ENCODE measurements at regions of chr19 and their contacts with region 1.

Region 1: DNA sequence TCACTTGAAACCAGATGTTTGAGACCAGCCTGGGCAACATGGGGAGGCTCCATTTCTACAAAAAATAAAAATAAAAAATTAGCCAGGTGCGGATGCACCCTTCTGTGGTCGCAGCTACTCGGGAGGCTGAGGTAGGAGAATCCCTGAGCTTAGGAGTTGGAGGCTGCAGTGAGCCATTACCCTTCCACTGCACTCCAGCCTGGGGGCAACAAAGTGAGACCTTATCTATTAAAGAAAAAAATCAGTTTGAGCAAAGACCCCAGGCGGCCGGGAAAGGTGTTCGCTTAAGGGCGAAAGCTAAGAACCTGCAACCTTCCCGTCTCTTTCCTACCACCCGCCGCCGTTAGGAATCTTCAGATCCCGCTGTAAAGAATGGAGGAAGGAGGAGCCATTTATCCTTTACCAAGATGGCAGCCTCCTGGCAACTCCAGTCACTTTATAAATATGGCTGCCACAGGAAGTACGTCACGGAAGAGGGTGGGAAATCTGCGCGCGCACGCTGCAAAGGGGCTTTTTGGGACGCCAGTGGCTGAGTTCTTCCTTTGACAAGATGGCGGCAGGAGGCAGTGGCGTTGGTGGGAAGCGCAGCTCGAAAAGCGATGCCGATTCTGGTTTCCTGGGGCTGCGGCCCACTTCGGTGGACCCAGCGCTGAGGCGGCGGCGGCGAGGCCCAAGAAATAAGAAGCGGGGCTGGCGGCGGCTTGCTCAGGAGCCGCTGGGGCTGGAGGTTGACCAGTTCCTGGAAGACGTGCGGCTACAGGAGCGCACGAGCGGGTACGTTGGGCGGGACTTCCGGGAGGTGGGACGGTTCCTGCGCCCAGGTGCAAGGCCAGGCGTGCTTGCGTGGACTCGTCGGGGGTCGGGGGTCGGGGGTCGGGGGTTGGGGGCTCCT is at the start of gene NOP53:
- DNase-seq: peak; percentile 94
- H3K4me3 Mint-ChIP-seq: peak within 1 kb of the TSS; percentile 99
- H3K27ac Mint-ChIP-seq: peak within 1 kb of the TSS; percentile 100
- H3K4me1 Mint-ChIP-seq: peaks cover 37% of the 10 kb centered on the region
- H3K27me3 Mint-ChIP-seq: peaks cover 2% of the 10 kb centered on the region
- total RNA-seq, gene NOP53: 206 and 211 TPM in 2 replicates

Region 2: GRCh38 chr19:47112997-47113849 is 632.0 kb before region 1 on chr19 and contains the start of gene ZC3H4:
- intact Hi-C with region 1: loop called (anchors 1 kb)
- DNase-seq: peak; percentile 100
- H3K4me3 Mint-ChIP-seq: peak within 1 kb of the TSS; percentile 92
- H3K27ac Mint-ChIP-seq: peak within 1 kb of the TSS; percentile 99
- H3K4me1 Mint-ChIP-seq: peaks cover 33% of the 10 kb centered on the region
- H3K27me3 Mint-ChIP-seq: no peaks in the 10 kb centered on the region
- total RNA-seq, gene ZC3H4: 111 and 114 TPM in 2 replicates

Region 3: DNA sequence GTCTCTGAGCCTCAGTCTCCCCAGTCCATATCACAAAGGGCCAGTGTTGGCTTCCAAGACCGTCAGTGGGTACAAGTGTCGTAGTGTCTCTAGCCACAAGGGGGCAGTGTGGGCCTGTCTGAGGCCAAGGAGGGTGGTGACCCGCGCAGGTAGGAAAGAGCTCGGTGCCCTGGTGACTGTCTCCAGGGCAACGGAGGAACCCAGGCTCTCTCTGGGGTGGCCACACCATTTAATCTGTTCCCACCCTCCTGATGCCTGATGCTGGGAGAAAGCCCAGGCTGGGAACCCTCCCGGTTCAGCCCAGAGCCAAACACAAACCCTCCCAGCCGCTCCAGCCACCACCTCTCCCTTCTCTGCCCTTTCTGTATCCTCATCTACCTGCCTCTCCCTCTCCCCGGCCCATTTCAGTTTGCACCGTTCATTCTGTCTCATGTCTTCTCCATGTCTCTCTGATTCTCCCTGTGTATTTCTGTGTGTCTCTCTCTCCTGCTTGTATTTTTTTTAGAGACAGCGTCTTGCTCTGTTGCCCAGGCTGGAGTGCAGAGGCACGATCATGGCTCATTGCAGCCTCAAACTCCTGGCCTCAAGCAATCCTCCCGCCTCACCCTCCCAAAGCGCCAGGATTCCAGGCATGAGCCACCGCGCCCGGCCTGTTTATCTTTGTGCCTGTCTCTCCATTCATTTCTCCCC is 308.4 kb before region 1 on chr19:
- intact Hi-C with region 1: loop called (anchors 1 kb)
- DNase-seq: peak; percentile 74
- H3K4me3 Mint-ChIP-seq: no peak overlapping the region
- H3K27ac Mint-ChIP-seq: no peak overlapping the region
- H3K4me1 Mint-ChIP-seq: peaks cover 32% of the 10 kb centered on the region
- H3K27me3 Mint-ChIP-seq: peaks cover 12% of the 10 kb centered on the region

Region 4: GRCh38 chr19:47600246-47601179 is 144.7 kb before region 1 on chr19:
- intact Hi-C with region 1: loop called (anchors 2 kb)
- DNase-seq: peak; percentile 98
- H3K4me3 Mint-ChIP-seq: peak overlapping the region; percentile 87
- H3K27ac Mint-ChIP-seq: peak overlapping the region; percentile 89
- H3K4me1 Mint-ChIP-seq: peaks cover 31% of the 10 kb centered on the region
- H3K27me3 Mint-ChIP-seq: peaks cover 1% of the 10 kb centered on the region

Region 5: GRCh38 chr19:47713046-47714021 is 31.9 kb before region 1 on chr19 and contains the start of gene EHD2:
- intact Hi-C with region 1: loop called (anchors 1 kb)
- DNase-seq: peak; percentile 9
- H3K4me3 Mint-ChIP-seq: no peak within 1 kb of the TSS
- H3K27ac Mint-ChIP-seq: no peak within 1 kb of the TSS
- H3K4me1 Mint-ChIP-seq: no peaks in the 10 kb centered on the region
- H3K27me3 Mint-ChIP-seq: peaks cover 21% of the 10 kb centered on the region
- total RNA-seq, gene EHD2: 0.29 and 0.54 TPM in 2 replicates

Region 6: DNA sequence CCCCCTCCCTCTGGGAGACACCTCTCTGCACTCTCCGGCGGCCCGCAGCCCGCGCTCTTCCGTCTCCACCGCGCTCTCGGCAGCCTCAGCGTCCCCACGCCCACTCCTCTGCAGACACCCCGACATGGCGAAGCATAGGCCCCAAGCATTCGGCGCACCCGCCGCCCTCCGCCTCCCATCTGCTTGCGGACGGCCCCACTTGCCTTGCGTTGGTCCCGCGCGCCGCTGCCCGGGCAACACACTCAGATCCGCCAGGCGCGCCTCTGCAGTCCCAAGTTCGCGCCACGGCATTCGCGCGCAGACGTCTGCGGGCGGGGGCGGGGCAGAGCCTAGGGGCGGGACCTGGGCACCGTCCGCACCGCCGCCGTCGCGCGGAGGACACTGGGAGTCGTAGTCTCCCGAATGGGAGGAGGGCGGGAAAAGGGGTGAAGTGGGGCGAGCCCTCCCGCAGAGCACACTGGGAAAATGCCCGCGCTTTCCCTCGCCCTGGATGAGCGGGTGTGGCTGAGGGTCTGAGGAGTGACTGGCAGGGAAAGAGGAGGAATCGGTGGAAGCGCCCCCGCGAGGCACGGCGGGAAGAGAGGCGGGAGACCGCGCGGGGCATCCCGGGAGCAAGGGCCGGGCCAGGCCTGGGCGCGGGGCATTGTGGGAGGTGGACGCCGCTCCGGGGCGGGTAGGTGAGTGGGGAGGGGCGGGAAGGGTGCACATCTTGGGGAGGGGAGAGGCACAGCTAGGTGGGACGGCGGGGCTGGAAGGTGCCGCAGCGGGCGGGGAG is 425.0 kb after region 1 on chr19 and contains the starts of genes LIG1 and ZSWIM9:
- intact Hi-C with region 1: loop called (anchors 10 kb)
- DNase-seq: peak; percentile 89
- H3K4me3 Mint-ChIP-seq: peak within 1 kb of the TSS; percentile 97
- H3K27ac Mint-ChIP-seq: peak within 1 kb of the TSS; percentile 100
- H3K4me1 Mint-ChIP-seq: peaks cover 33% of the 10 kb centered on the region
- H3K27me3 Mint-ChIP-seq: peaks cover 3% of the 10 kb centered on the region
- total RNA-seq, gene LIG1: 133 and 140 TPM in 2 replicates
- total RNA-seq, gene ZSWIM9: 8.4 and 9.5 TPM in 2 replicates